AG04450 (cell line): ENCODE measurements at regions of chr19 and their contacts with region 1.

Region 1: DNA sequence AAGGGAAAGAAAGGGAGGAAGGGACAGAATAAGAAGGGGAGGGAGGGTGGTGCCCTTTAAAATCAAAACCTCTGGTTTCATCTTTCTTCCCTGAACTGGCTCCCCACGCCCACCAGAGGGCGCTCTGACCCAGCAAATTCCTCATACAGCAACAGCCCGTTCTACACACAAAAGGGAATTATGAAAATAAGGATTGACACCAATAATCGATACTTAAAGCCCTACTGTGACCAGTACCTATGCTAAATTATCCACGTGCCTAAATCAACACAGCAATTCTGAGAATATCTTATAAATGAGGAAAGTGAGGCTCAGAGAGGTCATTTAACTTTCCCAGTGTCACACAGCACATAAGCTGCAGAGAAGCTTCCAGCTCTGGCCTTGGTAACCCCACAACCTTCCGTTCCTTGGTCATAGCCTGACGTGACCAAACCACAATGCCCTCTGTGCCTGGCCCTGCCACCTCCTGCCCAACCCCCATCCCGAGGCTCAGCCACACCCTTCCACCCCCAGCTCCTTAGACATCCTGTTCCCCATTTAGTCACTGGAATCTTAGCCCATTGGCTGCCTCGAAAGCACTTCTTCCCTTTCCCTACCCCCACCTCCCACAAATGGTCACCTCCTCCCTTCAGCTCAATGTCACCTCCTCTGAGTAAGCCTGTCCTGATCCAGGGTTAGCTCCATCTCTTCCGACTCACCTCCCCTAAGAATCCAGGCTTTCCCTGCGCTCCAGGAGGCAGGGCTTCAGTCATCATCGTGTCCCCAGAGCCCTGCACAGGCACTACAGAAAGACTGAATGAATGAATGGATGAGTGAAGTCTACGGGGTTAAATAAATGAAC is 34.2 kb upstream of the PNMA8B start:
- DNase-seq: no peak
- H3K4me3 ChIP-seq: no peak overlapping the region
- H3K27ac ChIP-seq: no peak overlapping the region
- H3K27me3 ChIP-seq: peaks cover 10% of the 10 kb centered on the region
- CTCF ChIP-seq: peak; percentile 96

Region 2: GRCh38 chr19:46513461-46514236 is 16.2 kb before region 1 on chr19:
- CTCF ChIA-PET with region 1: interaction called, 23 read pairs
- POLR2A ChIA-PET with region 1: no interaction called
- DNase-seq: no peak
- H3K4me3 ChIP-seq: no peak overlapping the region
- H3K27ac ChIP-seq: no peak overlapping the region
- H3K27me3 ChIP-seq: peaks cover 5% of the 10 kb centered on the region
- CTCF ChIP-seq: peak; percentile 70